ENCODE measurements at regions of chr1 and their contacts with region 1.

Region 1: DNA sequence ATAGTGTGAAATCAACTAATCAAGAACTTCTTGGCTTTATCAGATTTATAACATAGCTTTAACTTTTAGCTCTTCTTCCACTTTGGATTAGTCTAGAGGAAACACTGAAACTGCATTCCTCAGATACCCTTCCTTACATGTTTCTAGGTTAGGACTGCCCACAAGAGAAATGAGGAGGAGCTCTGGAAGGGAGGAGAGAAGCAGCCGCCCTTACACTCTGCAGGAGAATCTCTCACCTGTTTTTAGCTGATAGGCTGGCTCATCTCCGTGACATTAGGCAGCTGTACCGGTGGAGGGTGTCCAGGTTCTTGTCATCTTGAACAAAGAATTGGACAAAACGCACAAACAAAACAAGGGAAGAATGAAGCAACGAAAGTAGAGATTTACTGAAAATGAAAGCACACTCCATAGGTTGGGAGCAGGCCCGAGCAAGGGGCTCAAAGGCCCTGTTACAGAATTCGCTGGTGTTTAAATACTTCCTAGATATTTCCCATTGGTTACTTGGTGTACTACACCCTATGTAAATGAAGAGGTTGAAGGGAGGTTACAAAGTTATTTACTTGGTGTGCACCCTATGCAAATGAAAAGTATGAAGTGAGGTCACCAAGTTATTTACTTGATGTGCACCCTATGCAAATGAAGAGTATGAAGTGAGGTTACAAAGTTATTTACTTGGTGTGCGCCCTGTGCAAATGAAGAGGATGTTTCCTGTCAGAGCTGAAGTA is 524.9 kb upstream of the CHRM3 start:
- DNase-seq: no peak
- ATAC-seq: peak in 1 of 4 donors; percentile 35
- H3K4me3 ChIP-seq: no peak overlapping the region
- H3K27ac ChIP-seq: no peak overlapping the region
- H3K4me1 ChIP-seq: no peaks in the 10 kb centered on the region
- H3K27me3 ChIP-seq: no peaks in the 10 kb centered on the region
- CTCF ChIP-seq: no peak

Region 2: DNA sequence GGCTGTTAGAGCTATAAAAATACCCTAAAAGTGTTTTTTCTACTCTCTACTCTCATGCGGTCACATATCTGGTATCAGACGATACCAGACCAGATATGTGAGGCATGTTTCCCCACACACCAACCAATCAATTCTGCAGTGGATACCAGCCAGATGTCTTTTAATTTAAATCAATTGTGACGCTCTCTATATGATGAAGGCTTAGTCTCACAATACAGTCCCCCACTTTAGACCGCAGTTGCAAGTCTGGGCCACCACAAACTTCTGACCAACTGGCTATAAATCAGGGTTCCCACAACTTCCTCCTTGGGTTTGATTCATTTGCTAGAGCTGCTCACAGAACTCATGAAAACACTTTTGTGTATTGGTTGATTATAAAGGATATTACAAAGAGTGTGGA is 384.7 kb before region 1 on chr1:
- intact Hi-C with region 1: no loop called
- DNase-seq: no peak
- ATAC-seq: no peak
- H3K4me3 ChIP-seq: no peak overlapping the region
- H3K27ac ChIP-seq: no peak overlapping the region
- H3K4me1 ChIP-seq: no peaks in the 10 kb centered on the region
- H3K27me3 ChIP-seq: no peaks in the 10 kb centered on the region
- CTCF ChIP-seq: no peak

Region 3: GRCh38 chr1:238777551-238777950 is 84.0 kb before region 1 on chr1:
- intact Hi-C with region 1: no loop called
- DNase-seq: no peak
- ATAC-seq: no peak
- H3K4me3 ChIP-seq: no peak overlapping the region
- H3K27ac ChIP-seq: no peak overlapping the region
- H3K4me1 ChIP-seq: no peaks in the 10 kb centered on the region
- H3K27me3 ChIP-seq: no peaks in the 10 kb centered on the region
- CTCF ChIP-seq: no peak

Region 4: GRCh38 chr1:238927899-238928298 is 66.4 kb after region 1 on chr1:
- intact Hi-C with region 1: loop called in 1 of 3 experiments (anchors 10 kb)
- DNase-seq: no peak
- ATAC-seq: no peak
- H3K4me3 ChIP-seq: no peak overlapping the region
- H3K27ac ChIP-seq: no peak overlapping the region
- H3K4me1 ChIP-seq: no peaks in the 10 kb centered on the region
- H3K27me3 ChIP-seq: no peaks in the 10 kb centered on the region
- CTCF ChIP-seq: no peak

Measured in pancreas (tissue), 10 donors.